Activated CD4-positive, alpha-beta memory T cell treated with anti-CD3 and anti-CD28 coated beads, Interleukin-2, amount 10 ng/mL, durations not matched to agents 7 days and 5 days (primary cell): ENCODE measurements at regions of chr6 and their contacts with region 1.

Region 1: DNA sequence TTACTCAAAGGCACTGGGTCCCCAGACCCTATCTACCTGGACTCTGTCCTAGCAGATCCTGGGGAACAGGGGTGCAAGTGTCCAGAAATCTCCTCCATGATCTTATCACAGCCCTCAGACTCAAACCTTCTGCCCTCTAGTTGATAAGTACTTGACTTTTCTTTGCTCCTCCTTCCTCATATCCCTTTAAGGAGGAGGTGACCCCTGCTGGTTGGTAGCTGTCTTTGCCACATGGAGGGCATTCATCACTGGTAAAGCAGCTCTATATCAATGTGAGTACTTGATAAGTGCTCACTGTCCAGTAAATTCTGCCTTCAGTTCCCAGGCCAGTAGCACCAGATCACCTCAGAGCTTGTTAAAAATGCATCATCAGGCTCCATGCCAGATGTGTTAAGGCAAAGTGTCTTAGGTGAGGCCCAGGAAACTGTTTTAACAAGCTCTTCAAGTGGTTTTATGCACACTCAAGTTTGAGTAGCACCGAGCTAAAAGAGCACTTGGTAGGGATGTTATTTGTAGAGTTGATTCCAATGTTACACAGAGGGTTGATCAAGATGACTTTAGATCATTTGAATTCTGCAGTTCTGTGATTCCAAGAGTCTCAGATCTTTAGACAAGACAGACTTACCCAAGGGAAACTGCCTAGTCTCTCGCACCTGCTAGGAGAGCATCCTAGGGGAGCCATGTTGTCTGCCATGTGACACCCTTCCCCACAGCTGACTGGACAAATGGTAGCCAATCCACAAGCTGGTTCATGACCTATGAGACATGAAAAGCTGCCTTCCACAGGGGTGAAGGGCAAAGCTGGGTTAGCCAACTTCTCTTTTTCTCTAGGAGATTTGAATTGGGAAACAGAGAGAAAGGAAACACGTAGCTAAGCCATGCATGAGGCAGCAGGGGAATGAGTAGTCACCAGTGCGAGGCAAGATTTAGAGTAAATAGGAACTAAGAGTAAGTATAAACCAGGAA is 18.6 kb downstream of the TREML2 start:
- DNase-seq: peak; percentile 68
- H3K4me3 Mint-ChIP-seq: no peak overlapping the region
- H3K27ac Mint-ChIP-seq: no peak overlapping the region
- H3K4me1 Mint-ChIP-seq: peaks cover 33% of the 10 kb centered on the region
- H3K27me3 Mint-ChIP-seq: peaks cover 11% of the 10 kb centered on the region

Region 2: DNA sequence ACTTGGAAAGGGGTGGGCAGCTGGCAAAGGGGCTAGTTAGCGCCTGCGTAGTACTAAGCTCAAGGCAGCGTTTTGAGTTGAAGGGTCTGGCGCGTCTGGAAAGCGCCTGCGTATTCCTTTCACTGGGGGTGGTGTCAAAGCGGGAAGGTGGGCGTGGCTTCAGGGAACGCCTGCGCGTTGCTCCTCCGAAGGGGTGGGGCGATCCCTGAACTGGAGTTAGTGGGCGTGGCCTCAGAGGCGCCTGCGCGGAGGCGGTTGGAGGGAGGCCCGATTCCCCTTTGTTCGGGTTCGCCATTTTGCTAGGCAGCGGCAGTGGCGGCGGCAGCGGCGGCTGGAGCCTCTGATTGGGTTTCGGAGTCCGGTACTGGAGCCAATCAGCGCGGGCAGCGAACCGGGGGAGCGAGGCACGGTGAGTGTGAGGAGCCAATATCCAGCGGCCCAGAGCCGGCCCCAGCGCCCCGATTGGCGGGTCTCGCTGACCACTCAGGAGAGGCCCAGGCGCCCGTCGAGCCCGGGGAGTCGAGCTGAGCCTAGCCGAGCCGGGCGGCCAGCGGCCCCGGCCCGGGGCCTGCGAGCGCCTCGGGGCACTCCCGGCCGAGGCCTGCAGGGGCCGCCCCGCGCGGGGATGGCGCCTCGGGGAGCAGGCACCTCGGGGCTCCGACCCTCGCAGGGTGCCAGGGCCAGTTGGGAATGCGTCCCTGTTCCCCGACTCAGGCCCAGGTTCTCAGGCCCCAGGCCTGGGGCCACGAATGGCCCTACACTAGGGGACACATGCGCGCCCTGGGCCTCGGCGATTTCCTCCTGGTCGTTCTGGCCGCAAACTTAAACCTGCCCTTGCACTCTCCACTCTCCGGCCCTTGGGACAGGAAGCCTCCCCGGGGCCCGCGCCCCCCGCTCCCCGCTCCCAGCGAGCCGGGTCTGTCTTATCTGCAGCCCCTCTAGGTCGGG is 109.4 kb before region 1 on chr6 and contains the start of gene NFYA:
- CTCF ChIA-PET with region 1: interaction called, 14 read pairs
- POLR2A ChIA-PET with region 1: interaction called, 5 read pairs
- DNase-seq: peak; percentile 100
- H3K4me3 Mint-ChIP-seq: peak within 1 kb of the TSS; percentile 93
- H3K27ac Mint-ChIP-seq: peak within 1 kb of the TSS; percentile 99
- H3K4me1 Mint-ChIP-seq: peaks cover 66% of the 10 kb centered on the region
- H3K27me3 Mint-ChIP-seq: no peaks in the 10 kb centered on the region
- total RNA-seq, gene NFYA: 26.2 to 29.8 TPM

Region 3: DNA sequence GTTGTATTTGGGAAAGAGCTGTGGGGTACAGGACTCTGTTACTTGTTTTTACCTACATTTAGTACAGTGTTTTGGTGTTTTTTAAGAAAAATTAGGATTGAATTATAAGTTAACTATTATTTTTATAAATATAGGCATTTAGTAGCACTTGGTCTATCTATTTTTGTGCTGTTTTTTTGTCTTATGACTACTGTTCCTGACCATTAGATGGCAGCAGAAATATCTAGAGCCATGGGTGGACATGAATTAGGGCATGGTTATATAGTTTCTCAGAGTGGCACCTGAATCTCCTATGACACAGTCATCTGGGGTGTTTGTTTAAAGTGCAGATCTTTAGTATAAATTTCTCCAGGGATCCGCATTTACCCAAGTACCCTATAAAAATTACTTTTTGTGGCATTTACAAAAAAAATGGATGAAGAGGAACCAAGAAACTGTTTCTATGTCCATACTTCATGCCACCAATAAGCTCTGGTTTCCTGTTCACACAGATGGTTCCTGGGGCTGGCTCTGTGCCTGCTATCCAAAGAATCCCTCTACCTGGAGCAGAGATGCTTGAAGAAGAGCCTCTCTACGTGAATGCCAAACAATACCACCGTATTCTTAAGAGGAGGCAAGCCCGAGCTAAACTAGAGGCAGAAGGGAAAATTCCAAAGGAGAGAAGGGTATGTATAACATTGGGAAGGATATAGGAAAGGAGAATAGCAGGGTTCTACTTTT is 89.8 kb before region 1 on chr6:
- CTCF ChIA-PET with region 1: interaction called, 51 read pairs
- POLR2A ChIA-PET with region 1: no interaction called
- DNase-seq: no peak
- H3K4me3 Mint-ChIP-seq: no peak overlapping the region
- H3K27ac Mint-ChIP-seq: no peak overlapping the region
- H3K4me1 Mint-ChIP-seq: no peaks in the 10 kb centered on the region
- H3K27me3 Mint-ChIP-seq: no peaks in the 10 kb centered on the region

Region 4: GRCh38 chr6:41100871-41101287 is 81.5 kb before region 1 on chr6:
- CTCF ChIA-PET with region 1: interaction called, 14 read pairs
- POLR2A ChIA-PET with region 1: no interaction called
- DNase-seq: no peak
- H3K4me3 Mint-ChIP-seq: no peak overlapping the region
- H3K27ac Mint-ChIP-seq: no peak overlapping the region
- H3K4me1 Mint-ChIP-seq: no peaks in the 10 kb centered on the region
- H3K27me3 Mint-ChIP-seq: no peaks in the 10 kb centered on the region

Region 5: DNA sequence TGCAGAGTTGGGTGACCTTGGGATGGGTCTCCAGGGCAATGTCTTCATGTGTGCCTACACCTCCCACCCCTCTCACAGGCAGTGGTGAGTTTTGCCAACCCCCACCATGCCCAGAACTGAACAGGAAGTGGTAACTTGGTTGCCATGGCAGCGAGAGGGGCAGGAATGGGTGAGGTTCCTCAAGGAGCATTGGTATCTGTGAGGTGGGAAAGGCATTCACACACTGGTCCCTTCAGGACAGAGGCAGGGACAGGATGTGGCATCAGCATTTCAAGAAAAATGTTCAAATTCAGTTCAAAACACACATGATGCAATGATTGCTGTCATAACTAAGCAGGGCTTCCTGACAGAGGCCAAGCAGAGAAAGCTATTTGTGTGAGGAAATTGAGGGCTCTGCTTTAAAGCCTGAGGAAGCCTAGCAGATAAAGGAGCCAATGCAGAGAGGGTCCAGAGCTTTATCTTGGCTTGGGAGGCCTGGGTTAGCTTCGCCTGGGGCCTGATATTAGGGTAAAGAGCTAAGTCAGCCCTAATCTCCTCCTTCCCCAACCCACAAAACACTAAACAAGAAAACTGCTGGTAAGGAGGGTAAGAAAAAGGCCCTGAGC is 18.0 kb after region 1 on chr6:
- CTCF ChIA-PET with region 1: interaction called, 24 read pairs
- POLR2A ChIA-PET with region 1: interaction called, 31 read pairs
- DNase-seq: peak; percentile 77
- H3K4me3 Mint-ChIP-seq: peak overlapping the region; percentile 67
- H3K27ac Mint-ChIP-seq: peak overlapping the region; percentile 95
- H3K4me1 Mint-ChIP-seq: peaks cover 67% of the 10 kb centered on the region
- H3K27me3 Mint-ChIP-seq: no peaks in the 10 kb centered on the region